CD8-positive, alpha-beta T cell (primary cell): ENCODE measurements at regions of chr3 and their contacts with region 1.

Region 1: DNA sequence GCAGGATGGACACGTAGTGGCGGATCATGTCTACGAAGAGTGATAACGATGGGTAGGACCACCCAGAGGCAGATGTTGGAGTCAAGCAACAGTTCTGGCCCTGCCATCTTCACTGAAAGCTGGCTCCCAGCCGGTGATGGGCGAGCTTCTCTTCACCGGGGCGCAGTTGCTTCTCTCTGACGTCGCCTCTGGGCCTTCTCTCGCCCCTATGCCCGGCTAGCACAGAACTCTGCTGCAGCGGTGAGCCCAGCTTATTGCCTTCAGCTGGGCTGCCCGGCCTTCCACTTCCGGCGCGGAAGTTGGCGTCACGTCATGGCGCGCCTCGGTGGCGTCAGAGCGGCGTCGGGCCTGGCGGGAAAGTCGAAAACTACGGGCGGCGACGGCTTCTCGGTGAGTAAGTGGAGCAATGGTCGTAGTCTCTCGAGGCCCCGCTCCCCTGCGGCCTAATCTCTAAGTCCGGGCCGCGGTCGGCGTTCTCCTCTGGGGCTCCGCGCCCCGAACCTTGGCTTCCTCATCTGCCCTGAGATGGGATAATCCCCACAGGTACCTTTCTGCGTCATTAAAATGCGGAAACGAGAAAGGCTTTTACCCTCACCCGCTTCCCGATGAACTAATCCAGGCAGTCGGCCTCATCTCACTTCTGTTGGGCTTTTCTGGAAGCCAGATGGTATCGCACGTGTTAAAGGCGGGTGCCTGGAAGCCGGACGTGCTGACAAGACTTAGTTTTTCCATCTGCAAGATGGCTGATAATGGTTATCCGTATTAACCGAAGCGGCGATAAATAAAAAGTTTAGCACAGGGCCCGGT is at the start of gene FANCD2:
- DNase-seq: peak; percentile 87 to 97 (median 93)
- ATAC-seq: peak; percentile 92
- H3K4me3 ChIP-seq: peak within 1 kb of the TSS; percentile 76 to 82
- H3K4me3 Mint-ChIP-seq: peak within 1 kb of the TSS; percentile 98
- H3K27ac ChIP-seq: peak within 1 kb of the TSS; percentile 84
- H3K27ac Mint-ChIP-seq: peak within 1 kb of the TSS; percentile 96
- H3K4me1 ChIP-seq: peaks cover 18% of the 10 kb centered on the region
- H3K4me1 Mint-ChIP-seq: peaks cover 27% of the 10 kb centered on the region
- H3K27me3 ChIP-seq: no peaks in the 10 kb centered on the region
- H3K27me3 Mint-ChIP-seq: no peaks in the 10 kb centered on the region
- CTCF ChIP-seq: no peak
- total RNA-seq, gene FANCD2: 15.8 to 17.7 TPM

Region 2: DNA sequence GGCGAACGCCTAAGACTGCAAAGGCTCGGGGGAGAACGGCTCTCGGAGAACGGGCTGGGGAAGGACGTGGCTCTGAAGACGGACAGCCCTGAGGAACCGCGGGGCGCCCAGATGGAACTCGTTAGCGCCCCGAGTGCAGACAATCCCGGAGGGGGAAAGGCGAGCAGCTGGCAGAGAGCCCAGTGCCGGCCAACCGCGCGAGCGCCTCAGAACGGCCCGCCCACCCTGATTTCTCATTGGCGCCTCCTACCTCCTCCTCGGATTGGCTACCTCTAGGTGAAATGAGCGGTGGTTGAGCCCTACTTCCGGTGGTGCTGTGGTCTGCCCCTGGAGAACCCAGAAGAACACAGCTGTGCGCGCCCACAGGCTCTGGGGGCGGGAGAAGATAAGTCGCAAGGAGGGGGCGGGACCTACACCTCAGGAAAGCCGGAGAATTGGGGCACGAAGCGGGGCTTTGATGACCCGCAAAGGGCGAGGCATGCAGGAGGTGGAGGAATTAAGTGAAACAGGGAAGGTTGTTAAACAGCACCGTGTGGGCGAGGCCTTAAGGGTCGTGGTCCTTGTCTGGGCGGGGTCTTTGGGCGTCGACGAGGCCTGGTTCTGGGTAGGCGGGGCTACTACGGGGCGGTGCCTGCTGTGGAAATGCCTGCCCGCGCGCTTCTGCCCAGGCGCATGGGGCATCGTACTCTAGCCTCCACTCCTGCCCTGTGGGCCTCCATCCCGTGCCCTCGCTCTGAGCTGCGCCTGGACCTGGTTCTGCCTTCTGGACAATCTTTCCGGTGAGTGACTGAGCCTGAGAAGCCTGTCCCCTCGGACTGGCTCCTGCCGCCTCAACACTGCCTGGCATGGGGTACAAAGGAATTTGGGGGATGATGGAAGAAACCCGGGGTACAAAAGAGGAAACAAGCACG is 276.4 kb before region 1 on chr3 and contains the start of gene OGG1:
- CTCF ChIA-PET with region 1: no interaction called
- POLR2A ChIA-PET with region 1: no interaction called
- intact Hi-C with region 1: loop called in 1 of 2 experiments (anchors 5 kb)
- DNase-seq: peak; percentile 84 to 98 (median 95)
- ATAC-seq: peak; percentile 93
- H3K4me3 ChIP-seq: peak within 1 kb of the TSS; percentile 79 to 94
- H3K4me3 Mint-ChIP-seq: peak within 1 kb of the TSS; percentile 96
- H3K27ac ChIP-seq: peak within 1 kb of the TSS; percentile 50 to 52
- H3K27ac Mint-ChIP-seq: peak within 1 kb of the TSS; percentile 93
- H3K4me1 ChIP-seq: peaks cover 35% of the 10 kb centered on the region
- H3K4me1 Mint-ChIP-seq: peaks cover 44% of the 10 kb centered on the region
- H3K27me3 ChIP-seq: no peaks in the 10 kb centered on the region
- H3K27me3 Mint-ChIP-seq: no peaks in the 10 kb centered on the region
- CTCF ChIP-seq: no peak
- total RNA-seq, gene OGG1: 4.9 to 7.9 TPM

Region 3: DNA sequence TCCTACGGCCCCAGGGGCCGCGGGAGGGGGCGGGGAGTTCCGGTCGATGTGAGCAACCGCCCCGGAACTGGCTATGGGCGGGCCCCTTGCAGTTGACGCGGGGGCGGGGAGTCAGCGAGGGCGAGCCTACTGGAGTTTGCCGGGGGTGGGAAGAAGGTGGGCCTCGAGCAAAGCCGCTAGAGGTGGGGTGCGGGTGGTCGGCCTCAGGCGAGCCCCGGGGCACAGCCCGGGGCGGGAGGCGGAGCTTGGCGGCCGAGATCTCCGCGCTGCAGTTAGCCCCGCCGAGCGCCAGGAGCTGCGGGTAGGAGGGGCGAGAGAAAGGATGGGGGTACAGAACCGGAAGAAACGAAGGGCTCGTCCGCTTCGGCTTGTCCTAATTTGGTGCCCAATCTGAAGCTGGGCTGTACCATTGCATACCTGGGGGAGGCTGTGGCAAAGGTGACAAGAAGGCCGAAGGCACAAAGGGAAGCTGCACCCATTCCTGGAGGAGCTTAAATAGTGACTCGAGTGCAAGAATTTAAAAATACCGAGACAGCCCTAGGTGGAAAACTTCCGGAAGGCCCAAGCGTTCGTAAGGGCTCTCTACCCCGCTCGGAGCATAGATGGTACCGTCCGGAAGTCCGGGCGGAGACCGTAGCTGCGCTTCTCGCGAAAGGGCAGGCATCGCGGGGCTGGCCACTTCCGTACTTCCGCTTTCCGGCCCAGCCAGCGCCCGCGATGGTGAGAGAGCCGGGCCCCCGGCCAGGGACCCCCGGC is 233.7 kb before region 1 on chr3 and contains the starts of genes ARPC4 and TADA3:
- CTCF ChIA-PET with region 1: no interaction called
- POLR2A ChIA-PET with region 1: no interaction called
- intact Hi-C with region 1: loop called (anchors 2 to 5 kb)
- DNase-seq: peak; percentile 82 to 97 (median 92)
- ATAC-seq: peak; percentile 83
- H3K4me3 ChIP-seq: peak within 1 kb of the TSS; percentile 76 to 96
- H3K4me3 Mint-ChIP-seq: peak within 1 kb of the TSS; percentile 94
- H3K27ac ChIP-seq: peak within 1 kb of the TSS; percentile 93 to 98
- H3K27ac Mint-ChIP-seq: peak within 1 kb of the TSS; percentile 98
- H3K4me1 ChIP-seq: peaks cover 48% of the 10 kb centered on the region
- H3K4me1 Mint-ChIP-seq: peaks cover 58% of the 10 kb centered on the region
- H3K27me3 ChIP-seq: no peaks in the 10 kb centered on the region
- H3K27me3 Mint-ChIP-seq: no peaks in the 10 kb centered on the region
- CTCF ChIP-seq: no peak
- total RNA-seq, gene ARPC4: 97.7 to 104 TPM
- total RNA-seq, gene TADA3: 9.5 to 11.0 TPM

Region 4: GRCh38 chr3:9843715-9844438 is 182.4 kb before region 1 on chr3 and contains the start of gene RPUSD3:
- CTCF ChIA-PET with region 1: no interaction called
- POLR2A ChIA-PET with region 1: no interaction called
- intact Hi-C with region 1: loop called in 1 of 2 experiments (anchors 5 kb)
- DNase-seq: peak; percentile 93 to 99 (median 96)
- ATAC-seq: peak; percentile 98
- H3K4me3 ChIP-seq: peak within 1 kb of the TSS; percentile 96 to 99
- H3K4me3 Mint-ChIP-seq: peak within 1 kb of the TSS; percentile 97
- H3K27ac ChIP-seq: peak within 1 kb of the TSS; percentile 64 to 82
- H3K27ac Mint-ChIP-seq: peak within 1 kb of the TSS; percentile 90
- H3K4me1 ChIP-seq: peaks cover 6% of the 10 kb centered on the region
- H3K4me1 Mint-ChIP-seq: peaks cover 26% of the 10 kb centered on the region
- H3K27me3 ChIP-seq: no peaks in the 10 kb centered on the region
- H3K27me3 Mint-ChIP-seq: no peaks in the 10 kb centered on the region
- CTCF ChIP-seq: no peak
- total RNA-seq, gene RPUSD3: 5.3 to 6.4 TPM

Region 5: DNA sequence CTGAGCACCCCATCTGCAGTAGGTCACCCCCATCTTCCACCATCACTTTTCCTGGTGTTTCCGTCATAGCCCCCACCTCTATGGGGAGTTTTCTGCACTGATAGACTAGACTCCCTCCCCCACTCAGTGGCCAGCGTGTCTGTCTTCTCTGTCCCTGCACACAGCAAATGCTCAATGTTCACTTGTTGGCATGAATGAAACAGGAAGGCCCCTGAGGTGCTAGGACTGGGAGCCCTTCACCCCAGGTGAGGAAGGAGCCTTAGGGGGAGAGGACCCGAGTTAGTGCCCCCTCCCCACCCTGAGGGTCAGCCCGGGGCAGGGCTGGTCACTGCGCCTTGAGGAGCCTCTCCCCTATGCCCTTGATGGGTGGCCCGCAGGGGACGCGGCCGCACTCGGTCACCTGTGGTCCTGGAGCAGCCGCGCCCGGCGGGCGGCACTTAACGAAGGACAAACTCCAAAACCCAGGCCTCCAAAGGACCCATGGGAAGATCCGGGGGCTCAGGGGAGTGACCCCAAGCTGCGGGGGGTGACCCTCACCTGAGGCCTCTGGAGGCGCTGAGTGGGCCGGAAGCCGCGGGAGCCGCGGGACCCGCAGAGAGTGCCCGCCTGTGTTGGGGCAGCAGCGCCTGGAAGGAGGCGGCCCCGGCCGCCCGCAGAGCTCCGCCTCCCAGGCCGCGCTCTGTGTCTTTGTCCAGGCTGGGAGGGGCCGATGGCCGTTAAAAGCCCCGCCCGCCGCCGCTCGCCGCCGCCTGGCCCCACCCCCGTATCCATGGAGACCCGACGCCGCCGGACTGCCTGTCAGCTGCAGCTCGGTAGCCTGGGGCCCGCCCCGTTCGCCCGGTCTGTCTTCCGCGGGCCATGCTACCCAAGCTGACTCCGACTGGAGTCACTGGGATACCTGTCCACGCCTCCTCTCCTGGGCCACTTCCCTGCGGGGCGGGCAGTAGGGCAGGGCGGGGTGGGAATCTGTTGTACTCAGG is 15.5 kb before region 1 on chr3:
- CTCF ChIA-PET with region 1: no interaction called
- POLR2A ChIA-PET with region 1: interaction called, 3 read pairs
- intact Hi-C with region 1: loop called in 1 of 2 experiments (anchors 1 kb)
- DNase-seq: peak; percentile 46 to 88 (median 75)
- ATAC-seq: peak; percentile 54
- H3K4me3 ChIP-seq: peak overlapping the region; percentile 50 to 55
- H3K4me3 Mint-ChIP-seq: peak overlapping the region; percentile 68
- H3K27ac ChIP-seq: no peak overlapping the region
- H3K27ac Mint-ChIP-seq: no peak overlapping the region
- H3K4me1 ChIP-seq: peaks cover 17% of the 10 kb centered on the region
- H3K4me1 Mint-ChIP-seq: peaks cover 18% of the 10 kb centered on the region
- H3K27me3 ChIP-seq: no peaks in the 10 kb centered on the region
- H3K27me3 Mint-ChIP-seq: peaks cover 7% of the 10 kb centered on the region
- CTCF ChIP-seq: no peak

Region 6: DNA sequence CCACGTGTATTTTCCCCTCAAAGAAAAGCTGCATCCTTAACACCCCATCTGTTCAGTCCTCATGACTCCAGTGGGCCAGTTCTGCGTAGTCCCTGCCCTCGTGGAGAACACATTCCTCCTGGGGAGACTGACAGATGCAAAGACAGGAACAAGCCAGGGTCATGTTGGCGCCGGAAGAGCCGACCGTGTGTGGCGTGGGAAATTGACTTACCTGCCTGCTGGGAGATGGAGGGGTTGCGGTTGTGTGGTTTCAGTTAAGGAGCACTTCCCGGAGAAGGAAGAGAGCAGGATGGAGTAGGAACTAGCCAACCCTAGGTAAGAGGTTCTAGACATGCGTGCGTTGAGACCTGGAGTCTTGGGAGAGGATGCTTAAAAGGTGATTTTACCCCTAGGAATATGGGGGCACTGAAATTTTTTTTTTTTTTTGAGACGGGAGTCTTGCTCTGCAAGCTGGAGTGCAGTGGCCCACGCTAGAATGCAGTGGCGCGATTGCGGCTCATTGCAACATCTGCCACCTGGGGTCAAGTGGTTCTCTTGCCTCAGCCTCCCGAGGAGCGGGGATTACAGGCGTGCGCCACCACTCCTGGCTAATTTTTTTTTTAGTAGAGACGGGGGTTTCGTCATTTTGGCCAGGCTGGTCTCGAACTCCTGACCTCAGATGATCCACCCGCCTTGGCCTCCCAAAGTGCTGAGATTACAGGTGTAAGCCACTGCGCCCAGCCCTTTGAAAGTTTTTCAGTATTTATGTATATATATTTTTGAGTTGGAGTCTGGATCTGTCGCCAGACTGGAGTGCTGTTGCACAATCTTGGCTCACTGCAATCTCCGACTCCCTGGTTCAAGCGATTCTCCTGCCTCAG is 116.7 kb after region 1 on chr3:
- CTCF ChIA-PET with region 1: no interaction called
- POLR2A ChIA-PET with region 1: no interaction called
- intact Hi-C with region 1: loop called (anchors 1 to 2 kb)
- DNase-seq: peak in 3 of 9 experiments; percentile 22 to 51 (median 33)
- ATAC-seq: no peak
- H3K4me3 ChIP-seq: peak overlapping the region; percentile 73 to 74
- H3K4me3 Mint-ChIP-seq: peak overlapping the region; percentile 93
- H3K27ac ChIP-seq: peak overlapping the region in 1 of 2 experiments; percentile 54
- H3K27ac Mint-ChIP-seq: peak overlapping the region; percentile 98
- H3K4me1 ChIP-seq: peaks cover 32% of the 10 kb centered on the region
- H3K4me1 Mint-ChIP-seq: peaks cover 32% of the 10 kb centered on the region
- H3K27me3 ChIP-seq: no peaks in the 10 kb centered on the region
- H3K27me3 Mint-ChIP-seq: no peaks in the 10 kb centered on the region
- CTCF ChIP-seq: no peak

Region 7: DNA sequence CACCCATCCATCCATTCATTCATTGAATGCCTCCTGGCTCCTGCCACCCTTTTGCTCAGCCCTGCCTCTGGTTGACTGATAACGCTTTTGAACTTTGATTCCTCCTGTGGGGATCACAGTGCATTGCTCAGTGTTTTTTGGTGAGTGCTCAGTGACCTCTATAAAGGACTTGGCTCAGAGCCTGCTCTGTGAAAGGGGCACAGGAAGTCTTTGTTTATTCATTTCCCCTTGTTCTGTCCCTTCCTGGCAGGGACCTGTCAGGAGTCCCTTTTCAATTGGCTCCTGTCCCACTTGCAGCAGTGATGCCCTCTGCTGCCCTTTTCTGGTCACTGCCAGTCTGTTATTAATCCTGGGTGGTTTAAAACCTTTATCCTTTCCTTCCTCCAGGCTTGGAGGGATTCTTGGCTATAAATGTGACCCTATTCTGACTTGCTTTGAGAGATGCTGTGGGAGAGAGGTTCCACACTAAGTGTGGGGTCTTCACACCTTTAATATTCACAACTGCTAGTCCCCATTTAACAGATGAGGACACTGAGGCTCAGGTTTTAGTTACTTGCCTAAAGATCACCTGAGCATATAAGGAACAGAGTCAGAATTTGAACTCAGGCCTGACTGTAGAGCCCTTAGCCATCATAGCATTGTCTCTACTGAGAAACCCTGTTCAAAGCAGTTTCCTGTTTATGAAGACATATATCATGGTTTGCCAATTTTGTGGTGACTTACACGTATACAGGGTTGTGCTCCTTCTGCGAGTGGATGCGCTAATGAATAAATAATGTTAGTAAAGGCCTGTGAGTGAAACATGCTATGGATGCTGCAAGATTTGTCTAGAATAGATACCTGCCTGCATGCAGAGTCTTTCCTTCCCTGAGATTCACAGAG is 198.7 kb after region 1 on chr3:
- CTCF ChIA-PET with region 1: no interaction called
- POLR2A ChIA-PET with region 1: no interaction called
- intact Hi-C with region 1: loop called in 1 of 2 experiments (anchors 1 kb)
- DNase-seq: peak; percentile 34 to 81 (median 65)
- ATAC-seq: peak; percentile 70
- H3K4me3 ChIP-seq: no peak overlapping the region
- H3K4me3 Mint-ChIP-seq: peak overlapping the region; percentile 7
- H3K27ac ChIP-seq: peak overlapping the region in 1 of 2 experiments; percentile 30
- H3K27ac Mint-ChIP-seq: peak overlapping the region; percentile 75
- H3K4me1 ChIP-seq: peaks cover 24% of the 10 kb centered on the region
- H3K4me1 Mint-ChIP-seq: peaks cover 51% of the 10 kb centered on the region
- H3K27me3 ChIP-seq: no peaks in the 10 kb centered on the region
- H3K27me3 Mint-ChIP-seq: no peaks in the 10 kb centered on the region
- CTCF ChIP-seq: peak; percentile 86